ENCODE measurements at regions of chr14 and their contacts with region 1.

Region 1: DNA sequence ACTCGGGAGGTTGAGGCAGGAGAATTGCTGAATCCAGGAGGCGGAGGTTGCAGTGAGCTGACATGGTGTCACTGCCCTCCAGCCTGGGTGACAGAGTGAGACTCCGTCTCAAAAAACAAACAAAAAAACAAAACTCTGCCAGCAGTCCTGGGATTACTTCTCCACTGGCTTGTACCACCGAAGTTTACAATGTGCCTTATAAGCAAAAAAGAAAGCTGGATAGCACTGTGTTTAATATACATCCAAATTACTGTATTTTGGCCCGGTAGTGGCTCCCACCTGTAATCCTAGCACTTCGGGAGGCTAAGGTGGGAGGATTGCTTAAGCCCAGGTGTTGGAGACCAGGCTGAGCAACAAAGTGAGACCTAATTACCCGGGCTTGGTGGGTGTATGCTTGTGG is 16.7 kb downstream of the HOMEZ start:
- DNase-seq: no peak
- H3K4me3 ChIP-seq: no peak overlapping the region
- H3K27ac ChIP-seq: no peak overlapping the region
- H3K4me1 ChIP-seq: no peaks in the 10 kb centered on the region
- H3K27me3 ChIP-seq: no peaks in the 10 kb centered on the region
- CTCF ChIP-seq: no peak

Region 2: GRCh38 chr14:23301288-23301968 is 32.2 kb after region 1 on chr14:
- CTCF ChIA-PET with region 1: interaction called, 3 read pairs
- POLR2A ChIA-PET with region 1: no interaction called
- intact Hi-C with region 1: loop called (anchors 1 kb)
- DNase-seq: peak; percentile 86 to 97
- H3K4me3 ChIP-seq: peak overlapping the region; percentile 71
- H3K27ac ChIP-seq: peak overlapping the region; percentile 72
- H3K4me1 ChIP-seq: peaks cover 17% of the 10 kb centered on the region
- H3K27me3 ChIP-seq: no peaks in the 10 kb centered on the region
- CTCF ChIP-seq: peak; percentile 68

Region 3: GRCh38 chr14:23379366-23380196 is 110.4 kb after region 1 on chr14:
- CTCF ChIA-PET with region 1: no interaction called
- POLR2A ChIA-PET with region 1: no interaction called
- intact Hi-C with region 1: loop called (anchors 1 kb)
- DNase-seq: peak in 1 of 2 experiments; percentile 65
- H3K4me3 ChIP-seq: no peak overlapping the region
- H3K27ac ChIP-seq: no peak overlapping the region
- H3K4me1 ChIP-seq: no peaks in the 10 kb centered on the region
- H3K27me3 ChIP-seq: peaks cover 78% of the 10 kb centered on the region
- CTCF ChIP-seq: peak; percentile 82